ENCODE measurements at regions of chrX and their contacts with region 1.

Region 1: GRCh38 chrX:27555514-27555913 is 34.6 kb upstream of the DCAF8L2 start:
- DNase-seq: peak; percentile 25
- H3K4me3 ChIP-seq: no peak overlapping the region
- H3K27ac ChIP-seq: no peak overlapping the region
- H3K4me1 ChIP-seq: no peaks in the 10 kb centered on the region
- H3K27me3 ChIP-seq: no peaks in the 10 kb centered on the region
- CTCF ChIP-seq: peak; percentile 65 to 75

Region 2: GRCh38 chrX:27675493-27675892 is 120.0 kb after region 1 on chrX:
- CTCF ChIA-PET with region 1: no interaction called
- dilution Hi-C with region 1: no loop called
- in situ Hi-C with region 1: loop called in 1 of 2 experiments (anchors 25 kb)
- intact Hi-C with region 1: loop called (anchors 5 kb)
- DNase-seq: peak; percentile 76
- H3K4me3 ChIP-seq: no peak overlapping the region
- H3K27ac ChIP-seq: peak overlapping the region; percentile 17
- H3K4me1 ChIP-seq: peaks cover 17% of the 10 kb centered on the region
- H3K27me3 ChIP-seq: peaks cover 2% of the 10 kb centered on the region
- CTCF ChIP-seq: no peak

Region 3: DNA sequence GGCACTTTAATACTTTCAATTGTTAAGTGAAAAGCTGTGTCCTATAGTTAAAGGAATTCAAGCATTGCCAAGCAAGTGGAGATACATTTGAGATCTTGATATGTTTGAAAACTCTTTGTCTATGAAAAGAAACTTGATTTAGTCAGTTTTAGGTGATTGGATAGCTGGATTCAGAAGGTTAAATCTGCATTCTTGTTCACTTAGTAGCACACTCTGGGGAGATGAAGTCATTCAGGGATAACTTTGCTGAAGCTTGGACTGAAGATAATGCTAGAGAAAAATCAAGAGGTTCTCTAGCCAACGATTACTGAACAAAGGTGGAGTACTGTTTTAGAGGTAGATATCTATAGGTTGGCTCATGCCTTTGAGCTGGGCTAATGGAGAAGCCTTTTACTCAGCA is 125.2 kb after region 1 on chrX:
- CTCF ChIA-PET with region 1: no interaction called
- dilution Hi-C with region 1: no loop called
- in situ Hi-C with region 1: loop called in 1 of 2 experiments (anchors 25 kb)
- intact Hi-C with region 1: loop called (anchors 5 kb)
- DNase-seq: peak; percentile 5
- H3K4me3 ChIP-seq: no peak overlapping the region
- H3K27ac ChIP-seq: no peak overlapping the region
- H3K4me1 ChIP-seq: peaks cover 5% of the 10 kb centered on the region
- H3K27me3 ChIP-seq: peaks cover 2% of the 10 kb centered on the region
- CTCF ChIP-seq: no peak